SK-N-SH (cell line): ENCODE measurements at regions of chr11 and their contacts with region 1.

Region 1: GRCh38 chr11:119624102-119624615 is 104.8 kb downstream of the NECTIN1 start:
- DNase-seq: peak; percentile 87
- H3K4me3 ChIP-seq: no peak overlapping the region; a peak in 1 of 4 replicates
- H3K27ac ChIP-seq: no peak overlapping the region
- H3K4me1 ChIP-seq: peaks cover 0 to 14% of the 10 kb centered on the region in 2 experiments; a peak in 1 of 4 replicates
- H3K27me3 ChIP-seq: no peaks in the 10 kb centered on the region
- CTCF ChIP-seq: peak; percentile 56
- EP300 ChIP-seq: no peak
- RAD21 ChIP-seq: no peak; the same call in 1 of the 2 replicates

Region 2: DNA sequence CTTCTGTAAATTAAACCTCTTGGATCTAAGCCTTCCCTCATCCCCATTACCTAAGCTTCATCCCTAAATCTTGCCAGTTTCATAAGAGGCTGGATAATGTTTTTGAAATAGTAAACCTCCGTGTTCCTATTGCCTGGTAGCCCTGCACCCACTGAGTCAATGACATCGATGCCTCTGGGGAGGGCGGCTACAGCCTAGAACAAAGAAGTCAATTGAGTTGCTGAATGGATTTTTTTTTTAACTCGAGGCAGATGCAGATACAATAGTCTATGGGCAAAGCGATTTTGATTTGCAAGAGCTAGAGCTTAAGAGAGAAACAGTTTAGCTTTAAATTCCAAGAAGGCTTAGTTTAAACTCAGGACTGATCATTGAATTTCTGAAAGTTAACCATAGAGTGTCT is 16.4 kb before region 1 on chr11:
- CTCF ChIA-PET with region 1: interaction called, 22 read pairs
- POLR2A ChIA-PET with region 1: no interaction called
- DNase-seq: no peak
- H3K4me3 ChIP-seq: no peak overlapping the region
- H3K27ac ChIP-seq: no peak overlapping the region
- H3K4me1 ChIP-seq: no peaks in the 10 kb centered on the region; a peak in 1 of 4 replicates
- H3K27me3 ChIP-seq: no peaks in the 10 kb centered on the region
- CTCF ChIP-seq: no peak
- EP300 ChIP-seq: no peak
- RAD21 ChIP-seq: no peak

Region 3: DNA sequence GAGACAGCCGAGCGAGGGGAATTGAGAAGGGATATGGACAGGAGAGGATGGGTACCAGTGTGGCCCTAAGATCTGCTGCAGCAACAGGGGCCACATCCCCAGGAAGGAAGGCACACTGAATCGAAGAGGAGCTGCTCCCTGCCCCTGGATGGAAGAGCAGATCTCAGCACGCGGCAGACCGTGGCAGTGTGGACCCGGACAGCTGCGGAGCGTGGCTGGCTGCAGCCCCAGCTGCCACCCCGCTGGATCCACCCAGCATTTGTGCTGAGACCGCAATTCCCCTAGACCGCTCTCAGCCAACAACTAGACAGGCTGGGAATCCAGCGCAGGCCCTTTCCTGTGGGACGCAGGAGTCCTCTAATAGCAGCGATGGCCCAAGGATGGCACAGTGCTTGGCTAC is 10.1 kb after region 1 on chr11:
- CTCF ChIA-PET with region 1: interaction called, 18 read pairs
- POLR2A ChIA-PET with region 1: no interaction called
- DNase-seq: no peak
- H3K4me3 ChIP-seq: no peak overlapping the region
- H3K27ac ChIP-seq: no peak overlapping the region
- H3K4me1 ChIP-seq: peaks cover 0 to 10% of the 10 kb centered on the region in 2 experiments; a peak in 1 of 4 replicates
- H3K27me3 ChIP-seq: no peaks in the 10 kb centered on the region
- CTCF ChIP-seq: no peak
- EP300 ChIP-seq: no peak
- RAD21 ChIP-seq: no peak

Region 4: GRCh38 chr11:119640541-119640940 is 16.4 kb after region 1 on chr11:
- CTCF ChIA-PET with region 1: interaction called, 18 read pairs
- POLR2A ChIA-PET with region 1: no interaction called
- DNase-seq: no peak
- H3K4me3 ChIP-seq: no peak overlapping the region
- H3K27ac ChIP-seq: no peak overlapping the region
- H3K4me1 ChIP-seq: peaks cover 0 to 26% of the 10 kb centered on the region in 2 experiments; a peak in 1 of 4 replicates
- H3K27me3 ChIP-seq: no peaks in the 10 kb centered on the region
- CTCF ChIP-seq: no peak
- EP300 ChIP-seq: no peak
- RAD21 ChIP-seq: no peak

Region 5: DNA sequence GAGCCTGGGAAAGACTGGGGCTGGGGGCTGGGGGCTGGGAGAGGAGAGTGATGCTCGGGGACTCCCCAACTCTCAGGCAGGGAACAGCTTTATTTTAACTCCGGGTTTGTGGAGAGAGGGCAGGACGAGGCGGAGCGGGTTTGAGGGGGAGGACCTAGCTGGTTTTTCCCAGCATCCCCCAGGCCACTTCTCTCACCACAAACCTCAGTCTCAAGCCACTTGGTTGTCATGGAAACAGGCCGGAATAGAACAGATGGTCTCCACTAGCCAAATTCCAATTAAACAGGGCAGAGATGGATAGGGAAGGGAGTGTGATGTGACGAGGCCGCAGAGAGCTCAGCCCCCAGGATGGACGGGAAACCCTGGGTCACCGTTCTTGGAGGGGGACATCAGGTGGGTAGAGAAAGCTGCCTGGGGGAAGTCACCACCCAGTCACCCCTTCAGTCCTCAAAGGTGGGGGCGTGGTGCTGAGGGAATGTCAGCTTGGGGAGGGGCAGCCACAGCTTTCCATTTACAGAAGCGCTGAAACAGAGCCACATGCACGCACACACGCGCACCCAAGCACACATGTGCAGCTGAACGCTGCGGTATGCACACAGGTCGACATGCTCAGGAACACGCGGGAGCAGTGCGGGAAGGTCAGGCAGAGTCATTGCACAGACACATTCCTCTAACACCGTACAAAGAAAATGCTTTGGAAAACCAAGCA is 85.6 kb after region 1 on chr11:
- CTCF ChIA-PET with region 1: no interaction called
- POLR2A ChIA-PET with region 1: no interaction called
- DNase-seq: peak; percentile 92
- H3K4me3 ChIP-seq: no peak overlapping the region; a peak in 1 of 4 replicates
- H3K27ac ChIP-seq: peak overlapping the region in 1 of 2 experiments; percentile 83; a peak in 2 of 4 replicates
- H3K4me1 ChIP-seq: peaks cover 2 to 61% of the 10 kb centered on the region in 2 experiments; a peak in 2 of 4 replicates
- H3K27me3 ChIP-seq: no peaks in the 10 kb centered on the region
- CTCF ChIP-seq: no peak
- EP300 ChIP-seq: no peak; a peak in 1 of 4 replicates
- RAD21 ChIP-seq: no peak